Vagina (tissue), 2 donors: ENCODE measurements at regions of chr2 and their contacts with region 1.

Region 1: DNA sequence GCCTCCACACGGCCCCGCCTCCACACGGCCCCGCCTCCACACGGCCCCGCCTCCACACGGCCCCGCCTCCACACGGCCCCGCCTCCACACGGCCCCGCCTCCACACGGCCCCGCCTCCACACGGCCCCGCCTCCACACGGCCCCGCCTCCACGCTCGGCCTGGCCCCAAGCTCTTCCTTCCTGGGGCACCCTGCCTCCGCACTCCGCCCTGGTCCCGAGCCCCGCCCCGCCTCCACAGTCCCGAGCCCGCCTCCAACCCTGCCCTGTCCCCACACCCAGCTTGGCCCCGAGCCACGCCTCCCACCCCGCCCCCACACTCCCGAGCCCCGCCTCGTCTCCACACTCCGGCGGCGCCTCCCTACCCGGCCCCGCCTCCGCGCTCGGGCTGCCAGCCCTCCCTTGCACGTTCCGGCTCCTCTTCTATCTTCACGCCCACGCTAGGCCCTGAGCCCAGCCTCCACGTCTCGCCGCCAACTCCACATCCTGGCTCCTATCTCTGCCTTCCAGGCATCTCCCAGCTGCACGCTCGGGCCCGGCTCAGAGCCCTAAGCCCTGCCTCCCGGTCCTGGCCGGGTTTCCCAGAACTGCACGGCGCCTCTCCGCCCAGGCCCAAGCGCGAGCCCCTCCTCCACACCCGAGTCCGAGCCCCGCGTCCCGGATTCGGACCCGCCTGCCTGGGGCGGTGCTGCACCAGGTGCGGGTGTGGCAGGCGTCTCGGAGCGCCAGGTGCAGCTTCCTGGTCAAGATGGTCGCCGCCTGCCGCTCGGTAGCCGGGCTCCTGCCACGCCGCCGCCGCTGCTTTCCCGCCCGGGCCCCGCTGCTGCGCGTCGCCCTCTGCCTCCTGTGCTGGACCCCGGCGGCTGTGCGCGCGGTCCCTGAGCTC is at the start of gene TMEM87B:
- DNase-seq: peak; percentile 98 to 99
- H3K4me3 ChIP-seq: peak within 1 kb of the TSS; percentile 77 to 92
- H3K27ac ChIP-seq: peak within 1 kb of the TSS; percentile 97
- H3K4me1 ChIP-seq: peaks cover 30% of the 10 kb centered on the region
- H3K27me3 ChIP-seq: no peaks in the 10 kb centered on the region
- CTCF ChIP-seq: no peak
- POLR2A ChIP-seq: peak in 1 of 2 donors; percentile 76
- total RNA-seq, gene TMEM87B: 18.9 TPM

Region 2: DNA sequence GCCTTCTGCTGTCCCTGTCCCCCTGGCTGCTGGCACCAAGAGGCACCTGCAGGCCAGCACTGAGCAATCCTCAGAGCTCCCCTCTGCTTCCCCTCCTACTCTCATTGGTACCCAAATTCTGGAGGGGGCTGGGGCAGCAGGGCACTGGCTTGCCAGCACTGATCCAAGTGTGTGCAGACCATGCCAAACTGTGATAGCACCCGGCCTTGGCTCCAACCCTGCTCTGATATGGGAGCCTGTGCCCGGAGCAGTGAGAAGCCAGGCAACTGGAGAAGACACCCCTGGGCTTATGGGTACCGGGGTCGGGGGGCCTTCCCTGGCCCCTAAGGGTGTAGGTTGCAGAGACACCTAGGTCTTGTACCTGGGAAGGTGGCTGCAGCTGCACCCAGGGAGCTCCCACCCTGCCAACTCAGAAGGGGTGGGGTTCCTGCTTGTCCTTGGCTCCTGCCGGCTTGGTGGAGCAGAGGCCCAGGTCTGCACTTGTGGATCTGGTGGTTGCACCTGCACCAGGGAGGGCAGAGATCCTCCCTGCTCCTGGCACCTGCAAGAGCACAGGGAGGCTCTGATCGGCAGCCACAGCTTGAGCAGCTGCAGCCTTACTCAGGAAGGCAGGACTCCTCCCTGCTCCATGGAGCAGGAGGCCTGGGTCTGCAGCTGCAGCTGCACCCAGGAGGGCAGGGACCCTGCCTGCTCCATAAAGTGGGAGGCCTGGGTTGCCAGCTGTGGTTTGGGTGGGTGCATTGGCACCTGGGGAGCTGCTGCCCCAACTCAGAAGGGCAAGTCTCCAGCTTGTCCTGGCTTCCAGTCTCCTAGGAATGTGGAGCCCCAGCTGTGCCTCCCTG is 838.1 kb before region 1 on chr2:
- intact Hi-C with region 1: no loop called
- DNase-seq: peak; percentile 64 to 77
- H3K4me3 ChIP-seq: no peak overlapping the region
- H3K27ac ChIP-seq: no peak overlapping the region
- H3K4me1 ChIP-seq: no peaks in the 10 kb centered on the region
- H3K27me3 ChIP-seq: no peaks in the 10 kb centered on the region
- CTCF ChIP-seq: no peak
- POLR2A ChIP-seq: no peak

Region 3: GRCh38 chr2:111897924-111898702 is 157.0 kb before region 1 on chr2 and contains the start of gene MERTK:
- intact Hi-C with region 1: loop called (anchors 5 kb)
- DNase-seq: no peak
- H3K4me3 ChIP-seq: peak within 1 kb of the TSS; percentile 80
- H3K27ac ChIP-seq: peak within 1 kb of the TSS; percentile 95
- H3K4me1 ChIP-seq: peaks cover 20% of the 10 kb centered on the region
- H3K27me3 ChIP-seq: no peaks in the 10 kb centered on the region
- CTCF ChIP-seq: peak in 2 of 3 experiments; percentile 59 to 71
- POLR2A ChIP-seq: peak in 1 of 2 donors; percentile 69
- total RNA-seq, gene MERTK: 15.7 TPM

Region 4: DNA sequence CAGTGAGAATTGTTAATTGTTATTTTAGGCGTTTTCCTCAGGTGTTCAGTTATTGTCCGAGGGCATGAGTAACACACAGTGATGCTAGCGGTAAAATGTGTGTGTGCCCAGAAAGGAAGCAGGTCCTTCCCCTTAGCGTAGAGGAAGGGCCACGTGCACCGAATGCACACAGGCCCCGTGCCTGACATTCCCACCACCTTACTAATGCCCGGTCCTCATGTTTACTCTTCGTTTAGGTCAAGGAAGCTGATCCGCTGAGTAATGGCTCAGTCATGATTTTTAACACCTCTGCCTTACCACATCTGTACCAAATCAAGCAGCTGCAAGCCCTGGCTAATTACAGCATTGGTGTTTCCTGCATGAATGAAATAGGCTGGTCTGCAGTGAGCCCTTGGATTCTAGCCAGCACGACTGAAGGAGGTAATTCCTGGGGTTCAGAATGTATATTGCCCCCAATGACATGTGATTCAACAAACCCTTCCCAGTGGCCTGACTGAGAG is 80.0 kb before region 1 on chr2:
- intact Hi-C with region 1: no loop called
- DNase-seq: peak; percentile 80 to 85
- H3K4me3 ChIP-seq: no peak overlapping the region
- H3K27ac ChIP-seq: no peak overlapping the region
- H3K4me1 ChIP-seq: no peaks in the 10 kb centered on the region
- H3K27me3 ChIP-seq: no peaks in the 10 kb centered on the region
- CTCF ChIP-seq: no peak
- POLR2A ChIP-seq: no peak